ENCODE measurements at regions of chr10 and their contacts with region 1.

Region 1: GRCh38 chr10:1230592-1231275 is 174.5 kb downstream of the WDR37 start:
- DNase-seq: no peak
- ATAC-seq: no peak
- H3K4me3 ChIP-seq: no peak overlapping the region
- H3K27ac ChIP-seq: no peak overlapping the region
- H3K4me1 ChIP-seq: no peaks in the 10 kb centered on the region
- H3K27me3 ChIP-seq: peaks cover 2 to 45% of the 10 kb centered on the region in 2 experiments; a peak in 3 of 5 replicates
- CTCF ChIP-seq: no peak
- EP300 ChIP-seq: no peak
- POLR2A ChIP-seq: no peak
- RAD21 ChIP-seq: no peak

Region 2: DNA sequence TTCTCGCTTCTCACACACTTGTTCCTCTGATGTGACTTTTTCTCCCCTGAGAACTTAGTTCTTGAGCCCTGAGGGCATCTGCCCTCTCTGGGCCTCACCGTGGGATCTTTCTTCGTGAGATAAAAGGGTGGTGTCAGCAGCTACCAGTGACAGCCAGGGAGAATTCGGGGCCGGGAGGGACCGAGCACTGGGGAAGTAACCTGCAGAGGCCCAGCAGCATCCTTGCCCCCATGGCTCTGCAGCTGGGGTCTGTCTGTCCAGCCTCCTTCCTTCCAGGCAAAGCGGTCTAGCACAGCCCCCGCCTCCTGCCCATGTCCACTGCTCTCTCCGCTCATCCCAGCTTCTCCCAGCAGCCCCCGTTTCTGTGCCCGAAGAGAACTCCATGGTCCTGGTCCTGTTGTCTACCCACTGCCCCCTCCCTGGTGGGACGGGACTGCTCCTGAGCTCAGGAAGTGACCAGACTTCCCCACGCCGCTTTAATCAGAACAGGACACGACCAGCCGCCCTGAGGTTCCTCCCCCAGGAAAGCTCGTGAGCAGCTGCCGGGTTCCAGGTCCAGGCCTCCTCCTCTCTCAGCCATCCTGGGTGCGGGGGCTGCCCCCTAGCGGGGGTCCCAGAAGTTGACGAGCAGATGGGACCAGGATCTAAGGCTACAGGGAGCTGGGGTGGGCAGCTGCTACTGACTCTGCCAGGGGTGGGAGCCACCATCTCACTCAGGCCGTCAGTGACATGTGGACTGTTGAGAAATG is 12.9 kb after region 1 on chr10:
- CTCF ChIA-PET with region 1: no interaction called
- POLR2A ChIA-PET with region 1: interaction called, 10 read pairs
- in situ Hi-C with region 1: no loop called
- intact Hi-C with region 1: no loop called
- DNase-seq: peak; percentile 52 to 66 (median 60)
- ATAC-seq: peak; percentile 89
- H3K4me3 ChIP-seq: no peak overlapping the region
- H3K27ac ChIP-seq: no peak overlapping the region
- H3K4me1 ChIP-seq: peaks cover 0 to 9% of the 10 kb centered on the region in 2 experiments; a peak in 3 of 5 replicates
- H3K27me3 ChIP-seq: peaks cover 37 to 62% of the 10 kb centered on the region in 2 experiments
- CTCF ChIP-seq: peak; percentile 40 to 53 (median 42)
- EP300 ChIP-seq: no peak
- POLR2A ChIP-seq: no peak
- RAD21 ChIP-seq: peak in 1 of 2 experiments; percentile 56; a peak in 2 of 4 replicates

Measured in K562 (cell line).